ENCODE measurements at regions of chrX and their contacts with region 1.

Region 1: GRCh38 chrX:49840679-49841078 is 11.6 kb downstream of the PAGE4 start:
- DNase-seq: peak; percentile 46
- H3K4me3 ChIP-seq: no peak overlapping the region
- H3K27ac ChIP-seq: no peak overlapping the region
- H3K4me1 ChIP-seq: no peaks in the 10 kb centered on the region
- H3K27me3 ChIP-seq: no peaks in the 10 kb centered on the region
- CTCF ChIP-seq: peak; percentile 21 to 34
- POLR2A ChIP-seq: no peak

Region 2: GRCh38 chrX:48631350-48632090 is 1209.2 kb before region 1 on chrX:
- CTCF ChIA-PET with region 1: no interaction called
- POLR2A ChIA-PET with region 1: no interaction called
- dilution Hi-C with region 1: no loop called
- intact Hi-C with region 1: loop called (anchors 5 kb)
- DNase-seq: peak; percentile 88
- H3K4me3 ChIP-seq: no peak overlapping the region
- H3K27ac ChIP-seq: no peak overlapping the region
- H3K4me1 ChIP-seq: no peaks in the 10 kb centered on the region
- H3K27me3 ChIP-seq: no peaks in the 10 kb centered on the region
- CTCF ChIP-seq: peak; percentile 42 to 51
- POLR2A ChIP-seq: no peak

Region 3: GRCh38 chrX:49276671-49277534 is 563.8 kb before region 1 on chrX:
- CTCF ChIA-PET with region 1: no interaction called
- POLR2A ChIA-PET with region 1: no interaction called
- dilution Hi-C with region 1: no loop called
- intact Hi-C with region 1: loop called (anchors 5 kb)
- DNase-seq: no peak
- H3K4me3 ChIP-seq: no peak overlapping the region
- H3K27ac ChIP-seq: no peak overlapping the region
- H3K4me1 ChIP-seq: no peaks in the 10 kb centered on the region
- H3K27me3 ChIP-seq: no peaks in the 10 kb centered on the region
- CTCF ChIP-seq: no peak
- POLR2A ChIP-seq: no peak

Region 4: DNA sequence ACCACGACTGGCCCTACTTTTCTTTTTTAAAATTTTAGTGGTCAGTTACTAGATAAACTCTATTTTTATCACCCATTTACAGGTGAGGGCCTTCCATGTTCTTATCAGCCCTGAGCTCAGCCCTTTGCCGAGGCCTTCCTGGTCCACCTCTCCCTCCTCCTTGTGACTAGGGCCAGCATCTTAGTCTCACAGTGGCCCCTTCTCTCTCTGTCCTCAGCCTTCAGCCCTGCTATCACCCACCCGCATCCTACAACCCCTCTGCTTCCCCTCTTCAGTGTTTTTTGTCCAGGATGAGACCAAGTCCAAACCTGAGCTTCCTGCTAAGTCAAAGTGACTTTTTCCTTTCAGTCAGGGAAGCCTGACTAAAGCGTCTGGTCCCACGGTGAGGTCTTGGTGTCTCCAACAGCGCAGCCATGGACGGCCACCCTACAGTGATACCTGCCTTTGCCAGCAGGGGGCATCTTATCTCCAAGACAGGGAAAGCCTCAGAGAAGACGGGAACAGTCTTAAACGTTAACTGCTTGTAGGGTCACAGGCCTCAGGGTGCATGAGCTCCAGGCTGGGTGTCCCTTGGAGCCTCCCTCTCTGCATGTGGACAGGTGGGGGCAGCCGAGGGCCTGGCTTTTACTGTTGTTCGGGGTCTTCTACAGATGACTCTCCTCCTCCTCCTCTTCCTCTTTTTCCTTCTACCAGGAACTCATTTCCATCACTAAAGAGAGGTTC is 548.9 kb before region 1 on chrX:
- CTCF ChIA-PET with region 1: no interaction called
- POLR2A ChIA-PET with region 1: no interaction called
- dilution Hi-C with region 1: no loop called
- intact Hi-C with region 1: loop called (anchors 5 kb)
- DNase-seq: peak; percentile 39
- H3K4me3 ChIP-seq: no peak overlapping the region
- H3K27ac ChIP-seq: no peak overlapping the region
- H3K4me1 ChIP-seq: no peaks in the 10 kb centered on the region
- H3K27me3 ChIP-seq: no peaks in the 10 kb centered on the region
- CTCF ChIP-seq: peak; percentile 60 to 68
- POLR2A ChIP-seq: no peak

Region 5: GRCh38 chrX:49761481-49761880 is 79.2 kb before region 1 on chrX:
- CTCF ChIA-PET with region 1: interaction called, 10 read pairs
- POLR2A ChIA-PET with region 1: no interaction called
- dilution Hi-C with region 1: no loop called
- intact Hi-C with region 1: loop called (anchors 1 kb)
- DNase-seq: peak; percentile 3
- H3K4me3 ChIP-seq: no peak overlapping the region
- H3K27ac ChIP-seq: no peak overlapping the region
- H3K4me1 ChIP-seq: no peaks in the 10 kb centered on the region
- H3K27me3 ChIP-seq: no peaks in the 10 kb centered on the region
- CTCF ChIP-seq: peak; percentile 11 to 28
- POLR2A ChIP-seq: no peak

Region 6: DNA sequence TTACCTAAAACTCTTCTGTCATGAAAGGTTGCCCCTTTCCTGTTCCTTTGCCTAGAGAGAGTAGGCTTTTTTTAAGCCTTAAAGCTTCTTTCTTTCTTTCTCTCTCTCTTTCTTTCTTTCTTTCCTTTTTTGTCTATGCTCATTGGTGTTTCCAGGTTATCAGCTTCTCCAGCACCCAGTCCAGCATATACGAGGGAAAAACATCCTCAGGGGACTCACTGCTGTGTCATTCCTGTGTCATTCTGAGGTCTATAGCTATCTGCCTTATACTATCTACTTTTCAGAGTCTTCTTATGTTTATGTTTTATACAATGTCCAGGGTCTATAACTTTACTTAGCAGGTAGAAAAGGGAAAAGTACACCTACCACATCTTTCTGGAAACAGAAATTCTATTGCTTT is 28.1 kb after region 1 on chrX:
- CTCF ChIA-PET with region 1: no interaction called
- POLR2A ChIA-PET with region 1: no interaction called
- dilution Hi-C with region 1: no loop called
- intact Hi-C with region 1: no loop called
- DNase-seq: no peak
- H3K4me3 ChIP-seq: no peak overlapping the region
- H3K27ac ChIP-seq: no peak overlapping the region
- H3K4me1 ChIP-seq: no peaks in the 10 kb centered on the region
- H3K27me3 ChIP-seq: peaks cover 0 to 9% of the 10 kb centered on the region in 2 experiments
- CTCF ChIP-seq: no peak
- POLR2A ChIP-seq: no peak

Region 7: GRCh38 chrX:49878834-49879659 is 38.4 kb after region 1 on chrX and contains the start of gene USP27X:
- CTCF ChIA-PET with region 1: interaction called, 6 read pairs
- POLR2A ChIA-PET with region 1: no interaction called
- dilution Hi-C with region 1: no loop called
- intact Hi-C with region 1: loop called (anchors 1 kb)
- DNase-seq: peak; percentile 77
- H3K4me3 ChIP-seq: peak within 1 kb of the TSS; percentile 62 to 75 (median 75)
- H3K27ac ChIP-seq: peak within 1 kb of the TSS; percentile 24
- H3K4me1 ChIP-seq: peaks cover 5% of the 10 kb centered on the region
- H3K27me3 ChIP-seq: no peaks in the 10 kb centered on the region
- CTCF ChIP-seq: peak; percentile 48 to 56
- POLR2A ChIP-seq: no peak
- total RNA-seq, gene USP27X: 2.3 and 3.0 TPM in 2 replicates

Measured in endothelial cell of umbilical vein (primary cell).